ENCODE measurements at regions of chr19 and their contacts with region 1.

Region 1: DNA sequence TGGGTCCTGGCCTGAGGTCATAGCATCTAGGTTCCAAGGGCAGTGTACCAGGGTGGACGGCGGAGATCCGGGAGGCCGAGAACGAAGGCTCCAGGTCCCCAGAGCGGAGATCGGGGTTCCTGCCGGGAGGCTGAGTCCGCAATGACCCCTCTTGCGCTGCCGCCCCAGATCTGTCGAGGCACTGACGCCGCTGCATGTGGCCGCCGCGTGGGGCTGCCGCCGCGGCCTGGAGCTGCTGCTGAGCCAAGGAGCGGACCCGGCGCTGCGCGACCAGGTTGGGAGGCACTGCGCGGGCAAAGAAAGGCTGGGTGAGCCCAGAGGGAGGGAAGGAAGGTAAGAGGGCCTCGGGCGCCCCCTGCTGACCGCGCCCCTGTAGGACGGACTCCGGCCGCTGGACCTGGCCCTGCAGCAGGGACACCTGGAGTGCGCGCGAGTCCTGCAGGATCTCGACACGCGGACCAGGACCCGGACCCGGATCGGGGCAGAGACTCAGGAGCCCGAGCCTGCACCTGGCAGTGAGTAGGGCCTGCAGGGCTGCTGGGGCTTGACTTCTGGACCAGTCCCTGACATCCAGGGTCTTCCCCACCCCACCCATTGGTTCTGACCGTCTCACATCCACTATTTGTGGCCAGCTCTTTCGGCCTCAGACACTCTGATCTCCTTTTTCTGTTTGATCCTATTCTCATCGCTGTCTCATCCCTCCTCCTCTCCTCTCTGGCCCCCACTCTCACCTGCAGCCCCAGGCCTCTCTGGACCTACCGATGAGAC is 971 bp downstream of the ANKLE1 start:
- DNase-seq: peak; percentile 88
- H3K4me3 Mint-ChIP-seq: peak overlapping the region; percentile 87
- H3K27ac Mint-ChIP-seq: no peak overlapping the region
- H3K4me1 Mint-ChIP-seq: peaks cover 3% of the 10 kb centered on the region
- H3K27me3 Mint-ChIP-seq: no peaks in the 10 kb centered on the region

Region 2: GRCh38 chr19:16771618-16772017 is 511.1 kb before region 1 on chr19:
- CTCF ChIA-PET with region 1: interaction called, 5 read pairs
- POLR2A ChIA-PET with region 1: no interaction called
- intact Hi-C with region 1: loop called (anchors 5 kb)
- DNase-seq: peak; percentile 81
- H3K4me3 Mint-ChIP-seq: no peak overlapping the region
- H3K27ac Mint-ChIP-seq: no peak overlapping the region
- H3K4me1 Mint-ChIP-seq: no peaks in the 10 kb centered on the region
- H3K27me3 Mint-ChIP-seq: peaks cover 20% of the 10 kb centered on the region

Region 3: DNA sequence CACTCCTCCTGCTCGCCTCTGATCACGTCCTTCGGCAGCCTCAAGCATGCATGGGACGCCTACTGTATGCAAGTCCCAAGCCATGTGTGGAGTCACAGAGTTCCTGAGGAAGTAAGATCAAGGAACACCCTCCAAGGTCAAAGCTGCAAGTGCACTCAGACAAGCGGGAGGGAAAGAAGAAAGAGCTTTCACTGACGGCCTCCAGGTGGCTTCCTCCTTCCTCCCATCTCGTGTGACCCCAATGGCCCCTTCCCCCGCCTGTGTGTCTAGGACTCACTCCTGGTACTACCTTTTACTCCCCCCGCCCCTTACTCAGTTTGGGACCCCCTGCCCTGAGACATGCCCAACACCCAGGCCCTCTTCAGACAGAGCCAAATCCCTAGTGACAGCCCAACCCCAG is 213.5 kb before region 1 on chr19:
- CTCF ChIA-PET with region 1: interaction called, 3 read pairs
- POLR2A ChIA-PET with region 1: no interaction called
- intact Hi-C with region 1: loop called (anchors 2 kb)
- DNase-seq: no peak
- H3K4me3 Mint-ChIP-seq: no peak overlapping the region
- H3K27ac Mint-ChIP-seq: no peak overlapping the region
- H3K4me1 Mint-ChIP-seq: peaks cover 29% of the 10 kb centered on the region
- H3K27me3 Mint-ChIP-seq: no peaks in the 10 kb centered on the region

Region 4: GRCh38 chr19:17205237-17206140 is 77.2 kb before region 1 on chr19:
- CTCF ChIA-PET with region 1: interaction called, 6 read pairs
- POLR2A ChIA-PET with region 1: no interaction called
- intact Hi-C with region 1: loop called (anchors 1 kb)
- DNase-seq: peak; percentile 69
- H3K4me3 Mint-ChIP-seq: no peak overlapping the region
- H3K27ac Mint-ChIP-seq: no peak overlapping the region
- H3K4me1 Mint-ChIP-seq: peaks cover 8% of the 10 kb centered on the region
- H3K27me3 Mint-ChIP-seq: no peaks in the 10 kb centered on the region

Region 5: GRCh38 chr19:17260842-17261325 is 21.8 kb before region 1 on chr19:
- CTCF ChIA-PET with region 1: interaction called, 85 read pairs
- POLR2A ChIA-PET with region 1: interaction called, 3 read pairs
- intact Hi-C with region 1: loop called (anchors 1 kb)
- DNase-seq: peak; percentile 95
- H3K4me3 Mint-ChIP-seq: no peak overlapping the region
- H3K27ac Mint-ChIP-seq: no peak overlapping the region
- H3K4me1 Mint-ChIP-seq: peaks cover 9% of the 10 kb centered on the region
- H3K27me3 Mint-ChIP-seq: no peaks in the 10 kb centered on the region

Region 6: DNA sequence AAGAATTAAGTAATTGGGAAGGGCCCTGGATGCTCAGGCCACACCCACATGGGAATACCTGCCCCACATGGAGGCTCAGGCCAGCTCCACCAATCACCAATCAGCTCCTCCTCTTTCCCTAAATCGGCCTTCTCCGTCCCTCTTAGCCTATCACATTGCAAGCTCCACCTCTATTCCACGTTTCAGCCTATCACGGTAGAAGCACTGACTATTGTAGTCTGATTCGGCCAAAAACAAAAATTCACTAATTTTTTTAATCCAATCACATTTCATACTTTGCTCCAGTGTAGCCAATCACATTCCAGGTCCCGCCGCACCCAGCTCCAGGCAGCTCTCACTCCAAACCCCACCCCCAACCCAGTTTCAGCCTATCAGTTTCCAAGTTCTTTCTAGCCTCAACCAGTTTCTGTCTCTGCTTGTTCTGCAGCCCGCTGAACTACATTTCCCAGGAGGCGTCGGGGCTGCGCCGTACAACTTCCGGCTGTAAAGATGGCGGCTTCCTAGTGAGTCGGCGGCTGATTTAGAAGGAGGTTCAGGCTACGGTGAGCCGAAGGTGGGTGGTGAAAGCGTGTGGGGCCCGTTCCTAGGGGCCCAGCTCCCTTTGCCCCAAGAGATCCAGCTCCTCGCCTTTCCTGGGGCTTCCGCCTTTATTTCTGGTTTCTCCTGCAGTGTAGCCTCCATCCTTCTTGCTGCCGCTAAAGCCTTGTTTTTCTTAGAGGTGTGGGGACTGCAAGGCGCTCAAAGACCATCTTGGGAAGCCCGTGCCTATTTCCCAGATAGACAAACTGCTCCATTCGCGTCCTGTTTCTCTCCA is 15.5 kb before region 1 on chr19 and contains the start of gene BABAM1:
- CTCF ChIA-PET with region 1: interaction called, 85 read pairs
- POLR2A ChIA-PET with region 1: interaction called, 13 read pairs
- intact Hi-C with region 1: no loop called
- DNase-seq: peak; percentile 97
- H3K4me3 Mint-ChIP-seq: peak within 1 kb of the TSS; percentile 90
- H3K27ac Mint-ChIP-seq: peak within 1 kb of the TSS; percentile 91
- H3K4me1 Mint-ChIP-seq: peaks cover 21% of the 10 kb centered on the region
- H3K27me3 Mint-ChIP-seq: peaks cover 2% of the 10 kb centered on the region
- total RNA-seq, gene BABAM1: 110 TPM

Region 7: DNA sequence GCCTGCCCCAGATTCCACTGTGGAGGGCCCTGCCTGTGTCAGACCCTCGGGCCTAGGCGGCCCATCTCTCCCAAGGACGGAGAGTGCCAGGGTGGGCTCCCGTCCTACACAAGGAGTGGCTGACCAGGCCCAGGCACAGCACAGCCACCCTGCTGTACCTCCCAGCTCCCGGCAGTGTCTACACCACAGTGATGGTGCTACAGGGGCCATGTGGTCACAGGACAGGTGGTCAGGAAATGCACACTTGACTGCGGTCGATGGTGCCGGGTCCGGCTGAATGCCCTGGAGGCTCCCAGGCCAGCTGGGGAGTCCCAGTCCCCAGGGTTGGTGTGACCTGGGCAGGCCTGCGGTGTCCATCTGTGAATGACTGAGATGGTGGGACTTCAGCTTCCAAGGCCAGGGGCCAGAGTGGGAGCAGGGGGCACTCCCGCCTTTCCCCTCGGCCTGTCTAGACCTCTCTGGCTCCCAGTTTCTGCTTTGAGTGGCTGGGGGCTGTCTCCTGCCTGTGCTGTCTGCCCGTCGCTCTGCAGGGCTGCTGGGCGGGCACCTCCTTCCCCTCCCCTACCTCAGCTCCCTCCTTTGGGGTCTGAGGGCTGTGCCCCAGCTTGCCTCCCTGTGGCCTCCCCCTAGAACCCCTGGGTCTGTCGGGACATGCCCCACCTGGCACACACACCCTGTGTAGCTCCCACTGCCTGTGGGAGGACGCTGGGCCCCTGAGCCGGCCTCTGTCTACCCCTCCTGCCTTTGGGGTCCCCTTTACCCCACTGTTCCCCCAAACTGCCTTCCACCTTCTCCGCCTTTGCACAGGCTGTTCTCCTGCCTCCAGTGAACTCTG is 39.2 kb after region 1 on chr19:
- CTCF ChIA-PET with region 1: no interaction called
- POLR2A ChIA-PET with region 1: no interaction called
- intact Hi-C with region 1: no loop called
- DNase-seq: no peak
- H3K4me3 Mint-ChIP-seq: no peak overlapping the region
- H3K27ac Mint-ChIP-seq: no peak overlapping the region
- H3K4me1 Mint-ChIP-seq: no peaks in the 10 kb centered on the region
- H3K27me3 Mint-ChIP-seq: no peaks in the 10 kb centered on the region